HCT116 (cell line): ENCODE measurements at regions of chr12 and their contacts with region 1.

Region 1: DNA sequence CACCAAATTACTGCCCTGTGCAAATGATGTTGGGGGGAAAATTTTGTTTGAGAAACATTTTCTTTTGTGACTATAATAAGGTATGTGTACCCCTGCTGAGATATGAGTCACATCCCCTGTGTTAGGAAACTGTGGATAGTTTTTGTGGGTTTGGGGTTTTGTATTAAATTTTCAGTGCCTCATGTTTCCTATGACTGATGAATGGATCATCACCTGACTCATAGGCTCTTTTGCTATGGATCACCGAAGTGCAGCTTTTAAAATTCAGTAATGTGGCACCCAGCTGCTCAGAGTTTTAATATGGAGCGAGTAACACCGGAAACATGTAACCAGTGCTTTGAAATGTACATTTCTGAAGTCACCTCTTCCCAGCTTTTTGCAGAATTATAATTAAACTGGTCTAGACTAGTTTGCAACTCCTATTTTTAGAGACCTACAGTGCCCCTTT is 167.4 kb upstream of the HMGA2 start:
- DNase-seq: peak; percentile 97
- ATAC-seq: peak; percentile 84
- H3K4me3 ChIP-seq: no peak overlapping the region
- H3K27ac ChIP-seq: peak overlapping the region; percentile 100
- H3K4me1 ChIP-seq: peaks cover 47 to 72% of the 10 kb centered on the region in 2 experiments
- H3K27me3 ChIP-seq: no peaks in the 10 kb centered on the region
- CTCF ChIP-seq: no peak
- POLR2A ChIP-seq: no peak
- RAD21 ChIP-seq: peak; percentile 56; the same call in 1 of the 2 replicates

Region 2: GRCh38 chr12:65643595-65644386 is 13.1 kb before region 1 on chr12:
- CTCF ChIA-PET with region 1: no interaction called
- POLR2A ChIA-PET with region 1: interaction called, 15 read pairs
- RAD21 ChIA-PET with region 1: no interaction called
- intact Hi-C with region 1: no loop called
- DNase-seq: no peak
- ATAC-seq: no peak
- H3K4me3 ChIP-seq: no peak overlapping the region
- H3K27ac ChIP-seq: peak overlapping the region; percentile 73
- H3K4me1 ChIP-seq: peaks cover 46 to 72% of the 10 kb centered on the region in 2 experiments
- H3K27me3 ChIP-seq: no peaks in the 10 kb centered on the region
- CTCF ChIP-seq: no peak
- POLR2A ChIP-seq: peak; percentile 83
- RAD21 ChIP-seq: no peak

Region 3: DNA sequence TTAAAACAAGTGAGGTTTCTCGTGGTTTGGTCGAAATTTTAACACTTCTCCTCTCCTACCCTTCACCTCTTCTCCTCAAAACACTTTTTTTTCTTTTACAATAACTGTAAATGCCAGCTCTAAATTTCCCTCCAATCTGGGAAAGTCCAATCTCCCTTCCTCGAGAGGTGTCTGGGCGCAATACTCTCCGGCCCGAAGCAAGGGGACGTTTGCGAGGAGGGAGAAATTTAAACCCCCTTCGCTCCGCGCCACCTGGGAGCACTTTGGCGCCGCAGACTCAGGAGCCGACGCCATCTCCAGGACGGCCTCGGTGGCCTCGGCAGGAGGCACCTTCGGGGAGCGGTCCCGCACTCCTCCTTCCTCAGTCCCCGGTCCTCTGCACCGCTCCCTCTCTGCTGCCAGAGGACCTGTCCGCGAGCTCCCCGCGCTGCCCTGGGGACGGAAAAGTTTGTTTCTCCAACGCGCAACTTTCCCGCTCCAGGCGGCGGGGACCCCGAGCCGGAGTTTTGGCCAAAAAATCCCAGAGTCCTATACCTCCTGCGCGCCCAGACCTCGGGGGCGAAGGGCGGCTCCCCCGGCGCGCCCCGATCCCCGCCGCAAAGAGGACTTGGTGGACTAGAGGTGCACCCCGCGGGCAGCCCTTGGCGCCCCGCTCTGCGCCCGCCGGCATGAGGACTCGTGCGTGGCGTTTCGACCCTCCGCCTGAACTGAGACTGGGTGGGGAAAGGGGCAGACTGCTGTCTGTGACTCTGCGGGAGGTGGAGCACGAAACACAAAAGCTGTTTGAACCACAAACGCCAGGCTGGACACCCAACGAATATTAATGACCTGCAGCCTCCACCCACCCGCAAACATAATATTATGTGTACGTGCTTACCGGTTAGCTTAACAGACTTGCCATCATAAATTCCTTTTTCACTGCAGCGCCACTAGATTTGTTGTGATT is 72.2 kb after region 1 on chr12:
- CTCF ChIA-PET with region 1: no interaction called
- POLR2A ChIA-PET with region 1: interaction called, 3 read pairs
- RAD21 ChIA-PET with region 1: no interaction called
- intact Hi-C with region 1: loop called (anchors 1 kb)
- DNase-seq: peak; percentile 59
- ATAC-seq: peak; percentile 71
- H3K4me3 ChIP-seq: peak overlapping the region; percentile 57 to 69
- H3K27ac ChIP-seq: peak overlapping the region; percentile 98
- H3K4me1 ChIP-seq: peaks cover 47 to 62% of the 10 kb centered on the region in 2 experiments
- H3K27me3 ChIP-seq: no peaks in the 10 kb centered on the region
- CTCF ChIP-seq: no peak
- POLR2A ChIP-seq: no peak
- RAD21 ChIP-seq: no peak